Prostate gland (tissue), 2 donors: ENCODE measurements at regions of chr7 and their contacts with region 1.

Region 1: DNA sequence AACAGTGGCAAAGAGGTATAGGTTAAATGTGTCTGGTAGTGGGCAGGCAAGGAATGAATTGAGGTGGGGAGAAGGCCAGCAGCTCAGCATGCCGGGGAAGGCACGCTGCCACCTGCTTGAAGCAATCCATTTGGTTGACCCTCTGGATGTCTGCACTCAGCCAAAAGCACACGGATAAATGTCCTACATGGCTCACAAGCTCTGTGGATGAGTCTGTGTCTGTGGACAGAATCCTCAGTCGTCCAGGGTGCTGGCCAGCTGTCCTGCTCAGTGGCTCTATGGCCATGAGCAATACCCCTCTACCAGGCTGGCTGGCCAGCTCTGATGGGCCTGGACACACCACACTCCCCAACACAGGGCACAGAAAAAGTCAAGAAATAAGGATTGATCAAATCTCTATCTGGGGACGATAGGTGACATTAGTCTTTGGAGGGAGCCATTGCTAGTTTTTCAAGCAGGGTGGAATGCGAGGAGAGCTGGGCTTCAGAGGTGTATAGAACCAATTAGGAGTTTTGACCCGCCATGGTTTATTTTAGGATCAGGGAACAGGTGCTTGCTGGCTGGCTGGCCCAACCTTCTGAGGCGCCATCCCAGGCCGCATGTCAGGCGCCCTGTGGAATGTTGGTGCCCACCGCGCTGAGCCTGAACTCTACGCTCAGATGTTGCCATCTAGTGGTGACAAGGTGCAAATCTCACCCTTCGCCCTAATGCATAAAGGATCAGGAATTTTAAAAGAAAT is 493.4 kb downstream of the TNS3 start:
- DNase-seq: peak; percentile 49
- H3K4me3 ChIP-seq: no peak overlapping the region
- H3K27ac ChIP-seq: no peak overlapping the region
- H3K4me1 ChIP-seq: no peaks in the 10 kb centered on the region
- H3K27me3 ChIP-seq: no peaks in the 10 kb centered on the region
- CTCF ChIP-seq: peak; percentile 68 to 86 (median 84)
- POLR2A ChIP-seq: no peak

Region 2: GRCh38 chr7:45923290-45923689 is 1165.2 kb before region 1 on chr7:
- intact Hi-C with region 1: loop called (anchors 2 kb)
- DNase-seq: peak; percentile 60
- H3K4me3 ChIP-seq: no peak overlapping the region
- H3K27ac ChIP-seq: no peak overlapping the region
- H3K4me1 ChIP-seq: no peaks in the 10 kb centered on the region
- H3K27me3 ChIP-seq: peaks cover 2% of the 10 kb centered on the region
- CTCF ChIP-seq: peak; percentile 63 to 91 (median 84)
- POLR2A ChIP-seq: no peak

Region 3: GRCh38 chr7:46603780-46604179 is 484.7 kb before region 1 on chr7:
- intact Hi-C with region 1: loop called (anchors 10 kb)
- DNase-seq: peak; percentile 53
- H3K4me3 ChIP-seq: no peak overlapping the region
- H3K27ac ChIP-seq: peak overlapping the region; percentile 28 to 33
- H3K4me1 ChIP-seq: no peaks in the 10 kb centered on the region
- H3K27me3 ChIP-seq: no peaks in the 10 kb centered on the region
- CTCF ChIP-seq: no peak
- POLR2A ChIP-seq: no peak

Region 4: DNA sequence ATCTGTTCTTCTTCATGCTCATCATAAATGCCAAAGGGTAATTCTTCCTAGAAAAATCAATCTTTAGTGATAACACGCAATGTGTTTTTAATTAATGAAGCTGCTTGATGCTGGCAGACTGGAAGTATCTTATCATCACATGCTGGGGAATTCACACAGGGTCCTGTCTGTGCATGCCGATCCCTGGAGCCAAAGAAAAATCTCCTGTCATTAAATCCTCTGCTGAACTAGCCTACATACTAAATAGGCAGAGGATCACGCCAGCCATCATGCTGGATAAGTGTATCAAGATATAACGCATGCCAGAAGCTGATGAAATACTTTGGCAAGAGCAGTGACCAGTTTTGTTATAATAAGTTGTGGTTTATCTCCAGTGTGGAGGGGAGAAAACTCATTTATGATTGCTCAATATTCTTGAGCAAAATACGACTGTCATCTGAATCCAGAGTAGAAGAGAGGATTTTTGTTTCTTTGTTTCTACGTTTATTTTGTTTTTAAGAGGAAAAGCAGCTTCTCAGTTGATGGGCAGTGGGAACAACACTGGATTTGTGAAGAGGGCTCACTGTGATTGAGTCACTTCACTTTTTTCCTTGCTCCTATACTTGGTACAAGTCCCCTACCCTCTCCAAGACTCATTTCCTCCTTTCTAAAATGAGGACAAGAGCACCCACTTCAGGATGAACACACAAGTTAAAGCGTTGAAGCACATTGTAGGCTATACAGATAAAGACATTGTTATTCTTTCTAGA is 155.6 kb before region 1 on chr7:
- intact Hi-C with region 1: loop called (anchors 5 kb)
- DNase-seq: peak; percentile 84
- H3K4me3 ChIP-seq: no peak overlapping the region
- H3K27ac ChIP-seq: peak overlapping the region; percentile 5 to 17
- H3K4me1 ChIP-seq: no peaks in the 10 kb centered on the region
- H3K27me3 ChIP-seq: no peaks in the 10 kb centered on the region
- CTCF ChIP-seq: no peak
- POLR2A ChIP-seq: no peak

Region 5: DNA sequence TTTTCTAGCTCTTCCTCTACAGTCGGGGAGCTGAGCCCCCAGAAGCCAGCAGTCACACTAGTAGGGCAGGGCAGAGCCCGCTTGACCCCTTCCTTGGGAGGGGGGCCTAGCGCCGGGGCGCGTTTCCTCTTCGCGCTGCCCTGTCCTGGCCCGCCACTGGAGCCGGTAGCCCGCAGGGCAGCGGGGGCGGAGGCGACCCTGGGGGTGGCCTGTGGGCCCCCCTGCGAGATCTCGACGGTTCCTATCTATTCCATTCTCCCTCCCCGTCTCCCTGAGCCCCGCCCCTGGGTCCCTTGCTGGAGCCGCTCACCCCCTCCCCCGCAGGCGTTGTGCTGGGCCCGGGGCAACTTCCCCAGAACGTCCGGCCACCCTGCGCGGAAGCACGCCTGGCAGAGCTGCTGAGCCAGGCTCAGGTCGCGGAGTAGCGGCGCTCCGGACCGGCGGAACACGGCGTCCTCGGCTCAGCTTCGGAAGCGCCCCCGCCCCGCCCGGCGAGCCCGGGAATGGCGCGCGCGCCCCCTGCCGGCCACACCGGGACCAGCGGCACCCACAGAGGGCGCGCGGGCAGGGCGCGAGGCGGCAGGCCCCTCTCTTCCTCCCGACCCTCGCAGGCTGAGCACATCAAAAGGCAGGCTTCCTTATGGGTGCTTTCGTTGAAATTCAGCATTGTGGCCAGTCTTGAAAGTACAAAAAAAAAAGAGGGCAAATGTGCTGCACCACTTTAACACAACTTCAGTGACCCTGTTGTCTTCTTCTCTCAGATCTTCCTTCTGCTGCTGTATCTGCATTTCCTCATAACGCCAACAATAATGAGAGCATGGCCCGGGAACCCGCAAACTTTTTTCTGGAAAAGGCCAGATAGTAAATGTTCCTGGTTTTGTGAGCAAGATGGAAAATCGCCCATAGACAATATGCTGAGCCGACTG is 165.8 kb after region 1 on chr7:
- intact Hi-C with region 1: loop called (anchors 5 kb)
- DNase-seq: peak; percentile 67
- H3K4me3 ChIP-seq: peak overlapping the region; percentile 42 to 43
- H3K27ac ChIP-seq: peak overlapping the region; percentile 72 to 78
- H3K4me1 ChIP-seq: no peaks in the 10 kb centered on the region
- H3K27me3 ChIP-seq: no peaks in the 10 kb centered on the region
- CTCF ChIP-seq: peak; percentile 91 to 96 (median 95)
- POLR2A ChIP-seq: no peak

Region 6: GRCh38 chr7:47474937-47475878 is 386.7 kb after region 1 on chr7:
- intact Hi-C with region 1: no loop called
- DNase-seq: peak; percentile 40
- H3K4me3 ChIP-seq: no peak overlapping the region
- H3K27ac ChIP-seq: peak overlapping the region; percentile 18 to 30
- H3K4me1 ChIP-seq: peaks cover 3% of the 10 kb centered on the region
- H3K27me3 ChIP-seq: no peaks in the 10 kb centered on the region
- CTCF ChIP-seq: peak in 1 of 4 experiments; percentile 41
- POLR2A ChIP-seq: peak; percentile 12

Region 7: GRCh38 chr7:48035301-48035966 is 946.9 kb after region 1 on chr7 and contains the start of gene C7orf57:
- intact Hi-C with region 1: no loop called
- DNase-seq: peak; percentile 51
- H3K4me3 ChIP-seq: peak within 1 kb of the TSS; percentile 16 to 32
- H3K27ac ChIP-seq: no peak within 1 kb of the TSS
- H3K4me1 ChIP-seq: peaks cover 2% of the 10 kb centered on the region
- H3K27me3 ChIP-seq: peaks cover 3% of the 10 kb centered on the region
- CTCF ChIP-seq: peak in 1 of 4 experiments; percentile 6
- POLR2A ChIP-seq: no peak
- total RNA-seq, gene C7orf57: 0.34 TPM in 1 of 2 donors, not detected in the other